ENCODE measurements at regions of chr15 and their contacts with region 1.

Region 1: DNA sequence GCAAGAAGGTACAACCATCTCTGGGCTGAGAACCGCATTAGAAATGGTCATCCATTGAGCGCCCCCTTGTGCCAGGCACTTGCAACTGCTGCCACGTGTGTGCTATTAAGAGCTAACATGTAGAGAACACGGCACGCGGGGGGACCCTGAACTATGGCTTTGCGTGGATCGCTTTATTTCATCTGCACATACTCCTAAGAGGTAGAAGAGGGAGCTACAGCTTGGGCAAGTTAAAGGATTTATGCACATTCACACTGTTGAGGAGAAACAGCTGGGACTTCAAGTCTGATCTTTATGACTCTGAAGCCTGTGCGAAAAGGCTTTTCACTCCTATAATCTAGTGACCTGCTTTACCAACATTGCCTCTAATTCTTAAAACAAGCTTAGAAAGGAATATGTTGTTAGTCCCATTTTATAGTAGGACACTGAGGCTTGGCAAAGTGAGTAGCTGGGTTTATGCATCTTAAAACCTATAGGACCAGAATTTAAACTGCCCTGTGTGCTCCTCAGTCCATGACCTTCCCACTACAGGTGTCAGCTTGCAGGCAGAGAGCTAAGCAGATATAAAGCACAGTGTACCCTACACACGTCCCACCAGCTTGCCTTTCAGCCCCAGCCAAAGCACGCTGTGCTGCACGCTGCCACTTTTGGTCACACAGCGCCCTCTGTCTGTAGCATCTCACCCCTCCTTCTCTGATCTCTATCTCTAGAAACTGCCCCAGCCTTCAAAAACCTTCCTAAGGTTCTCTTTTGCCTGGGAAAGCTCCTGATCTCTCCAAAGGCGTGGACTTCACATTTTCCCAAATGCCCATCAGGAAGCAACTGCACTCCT is 57.8 kb downstream of the STARD5 start:
- DNase-seq: peak; percentile 59
- ATAC-seq: peak; percentile 96
- H3K4me3 ChIP-seq: 0 out of 4 replicates have a peak overlapping the region, but pooled peaks of 1 of the 2 experiments have one; percentile 12
- H3K27ac ChIP-seq: no peak overlapping the region
- H3K4me1 ChIP-seq: peaks cover 5% of the 10 kb centered on the region
- H3K27me3 ChIP-seq: peaks cover 7% of the 10 kb centered on the region
- CTCF ChIP-seq: peak; percentile 92

Region 2: GRCh38 chr15:80977627-80978036 is 288.5 kb before region 1 on chr15:
- CTCF ChIA-PET with region 1: interaction called, 7 read pairs
- POLR2A ChIA-PET with region 1: no interaction called
- in situ Hi-C with region 1: no loop called
- intact Hi-C with region 1: loop called (anchors 5 kb)
- DNase-seq: no peak
- ATAC-seq: peak; percentile 87
- H3K4me3 ChIP-seq: no peak overlapping the region
- H3K27ac ChIP-seq: no peak overlapping the region
- H3K4me1 ChIP-seq: no peaks in the 10 kb centered on the region
- H3K27me3 ChIP-seq: no peaks in the 10 kb centered on the region
- CTCF ChIP-seq: peak; percentile 77

Region 3: DNA sequence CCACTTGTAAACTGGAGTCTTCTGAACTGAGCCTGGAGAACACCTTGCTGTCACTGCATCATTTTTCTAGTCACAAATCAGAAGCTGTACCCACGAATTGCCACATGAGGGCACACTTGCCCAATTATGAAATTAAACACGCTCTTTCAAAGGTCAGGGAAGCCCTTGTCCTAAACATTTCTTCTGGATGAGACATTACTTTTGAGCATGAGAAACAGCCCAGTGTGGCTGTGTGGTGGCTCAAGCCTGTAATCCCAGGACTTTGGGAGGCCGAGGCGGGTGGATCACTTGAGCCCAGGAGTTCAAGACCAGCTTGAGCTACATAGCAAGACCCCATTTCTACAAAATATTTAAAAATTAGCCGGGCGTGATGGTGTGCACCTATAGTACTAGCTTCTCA is 159.6 kb before region 1 on chr15:
- CTCF ChIA-PET with region 1: interaction called, 37 read pairs
- POLR2A ChIA-PET with region 1: no interaction called
- in situ Hi-C with region 1: no loop called
- intact Hi-C with region 1: loop called (anchors 1 kb)
- DNase-seq: peak; percentile 60
- ATAC-seq: peak; percentile 80
- H3K4me3 ChIP-seq: no peak overlapping the region
- H3K27ac ChIP-seq: no peak overlapping the region
- H3K4me1 ChIP-seq: no peaks in the 10 kb centered on the region
- H3K27me3 ChIP-seq: peaks cover 6% of the 10 kb centered on the region; the same call in 1 of the 2 replicates
- CTCF ChIP-seq: peak; percentile 85

Region 4: DNA sequence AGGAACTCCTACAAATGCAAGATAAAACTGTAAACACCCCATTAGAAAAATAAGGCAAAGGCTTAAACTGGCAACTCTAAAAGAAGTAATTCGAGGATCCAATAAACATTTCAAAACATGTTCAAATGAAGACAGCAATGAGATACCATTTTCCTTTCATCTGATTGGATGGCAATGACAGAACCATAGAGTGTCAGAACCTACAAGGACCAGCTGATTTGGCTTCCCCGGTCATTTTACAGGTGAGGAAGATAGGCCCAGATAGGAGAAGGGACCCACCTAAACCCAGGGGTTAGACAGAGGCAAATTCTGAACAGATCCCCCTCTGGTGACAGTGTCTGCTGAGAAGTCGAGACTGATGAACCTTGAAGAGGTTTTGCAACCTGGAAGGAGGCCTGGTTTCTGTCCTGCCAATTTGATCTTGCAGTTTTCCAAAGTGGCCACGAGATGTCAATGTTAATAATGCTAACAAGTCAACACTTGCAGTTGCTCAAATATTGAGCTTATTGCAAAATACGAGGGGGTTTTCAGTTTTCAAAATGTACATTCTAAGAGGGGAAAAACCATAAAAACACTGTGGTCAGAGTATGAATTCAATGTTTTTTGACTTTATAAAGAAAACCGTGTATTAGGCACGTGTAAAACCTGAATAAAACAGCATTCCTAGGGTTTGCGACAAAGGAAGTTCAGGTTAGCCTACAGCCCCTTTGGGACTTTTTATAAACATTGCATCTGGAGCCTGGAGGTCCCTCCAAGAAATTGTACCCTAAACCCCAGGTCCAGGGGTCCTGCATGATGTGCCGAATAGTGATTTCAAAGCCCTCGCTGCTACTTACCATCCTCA is 110.6 kb before region 1 on chr15:
- CTCF ChIA-PET with region 1: interaction called, 48 read pairs
- POLR2A ChIA-PET with region 1: interaction called, 4 read pairs
- in situ Hi-C with region 1: no loop called
- intact Hi-C with region 1: loop called (anchors 1 kb)
- DNase-seq: peak; percentile 25
- ATAC-seq: peak; percentile 73
- H3K4me3 ChIP-seq: no peak overlapping the region
- H3K27ac ChIP-seq: no peak overlapping the region
- H3K4me1 ChIP-seq: no peaks in the 10 kb centered on the region
- H3K27me3 ChIP-seq: no peaks in the 10 kb centered on the region
- CTCF ChIP-seq: peak; percentile 76

Measured in Panc1 (cell line).